PC-9 (cell line): ENCODE measurements at regions of chr1 and their contacts with region 1.

Region 1: GRCh38 chr1:116570358-116571200 is at the start of gene CD58:
- DNase-seq: peak; percentile 79 to 83
- H3K4me3 ChIP-seq: peak within 1 kb of the TSS; percentile 85
- H3K27ac ChIP-seq: peak within 1 kb of the TSS; percentile 90
- H3K4me1 ChIP-seq: peaks cover 37% of the 10 kb centered on the region
- H3K27me3 ChIP-seq: no peaks in the 10 kb centered on the region
- CTCF ChIP-seq: peak; percentile 78
- total RNA-seq, gene CD58: 15.9 and 23.6 TPM in 2 replicates

Region 2: GRCh38 chr1:115882913-115883902 is 687.4 kb before region 1 on chr1:
- CTCF ChIA-PET with region 1: no interaction called
- POLR2A ChIA-PET with region 1: no interaction called
- intact Hi-C with region 1: no loop called
- DNase-seq: no peak
- H3K4me3 ChIP-seq: no peak overlapping the region
- H3K27ac ChIP-seq: no peak overlapping the region
- H3K4me1 ChIP-seq: no peaks in the 10 kb centered on the region
- H3K27me3 ChIP-seq: no peaks in the 10 kb centered on the region
- CTCF ChIP-seq: no peak

Region 3: GRCh38 chr1:116139592-116140134 is 430.9 kb before region 1 on chr1:
- CTCF ChIA-PET with region 1: no interaction called
- POLR2A ChIA-PET with region 1: no interaction called
- intact Hi-C with region 1: loop called (anchors 1 kb)
- DNase-seq: no peak
- H3K4me3 ChIP-seq: no peak overlapping the region
- H3K27ac ChIP-seq: no peak overlapping the region
- H3K4me1 ChIP-seq: no peaks in the 10 kb centered on the region
- H3K27me3 ChIP-seq: no peaks in the 10 kb centered on the region
- CTCF ChIP-seq: no peak

Region 4: GRCh38 chr1:116288201-116288761 is 282.3 kb before region 1 on chr1:
- CTCF ChIA-PET with region 1: no interaction called
- POLR2A ChIA-PET with region 1: no interaction called
- intact Hi-C with region 1: no loop called
- DNase-seq: no peak
- H3K4me3 ChIP-seq: no peak overlapping the region
- H3K27ac ChIP-seq: no peak overlapping the region
- H3K4me1 ChIP-seq: peaks cover 42% of the 10 kb centered on the region
- H3K27me3 ChIP-seq: no peaks in the 10 kb centered on the region
- CTCF ChIP-seq: no peak

Region 5: DNA sequence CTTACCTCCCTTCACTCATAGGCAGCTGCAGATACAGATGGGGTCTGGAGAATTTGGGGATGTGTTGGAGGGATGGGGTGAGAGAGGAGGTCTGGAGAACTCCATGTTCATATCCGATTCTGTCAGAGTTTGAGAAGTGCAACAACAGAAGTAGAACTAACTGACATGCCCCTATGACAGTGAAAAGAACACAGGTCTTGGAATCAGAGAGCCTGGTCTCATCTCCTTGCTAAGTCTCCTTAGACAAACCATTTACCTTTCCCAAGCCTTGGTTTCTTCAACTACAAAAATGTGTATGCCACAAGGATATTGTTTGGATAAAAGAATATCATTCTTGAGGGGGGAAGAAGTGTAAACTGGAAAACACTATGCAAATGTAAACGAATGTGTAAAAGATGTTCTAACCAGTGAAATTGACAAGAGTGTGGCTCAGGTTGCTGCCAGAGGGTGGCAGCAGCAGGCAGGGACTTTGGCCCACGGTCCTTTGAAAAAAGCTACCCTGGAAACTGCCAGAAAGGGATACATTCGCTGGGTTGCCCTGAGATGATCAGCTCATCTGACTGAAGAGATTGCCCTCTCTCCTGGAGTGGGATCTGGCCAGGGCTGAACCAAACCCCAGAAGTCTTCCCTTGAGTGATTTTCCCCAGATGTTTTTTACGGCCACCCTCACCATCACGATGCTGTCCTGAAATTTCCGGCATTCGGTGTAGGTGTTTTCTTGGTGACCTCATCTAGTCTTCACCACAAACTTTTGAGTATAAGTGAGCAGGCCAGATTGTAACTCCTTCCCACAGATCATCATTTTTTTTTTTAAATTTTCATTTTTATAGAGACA is 166.7 kb after region 1 on chr1:
- CTCF ChIA-PET with region 1: interaction called, 4 read pairs
- POLR2A ChIA-PET with region 1: no interaction called
- intact Hi-C with region 1: loop called (anchors 5 kb)
- DNase-seq: peak in 1 of 2 experiments; percentile 45
- H3K4me3 ChIP-seq: no peak overlapping the region
- H3K27ac ChIP-seq: no peak overlapping the region
- H3K4me1 ChIP-seq: no peaks in the 10 kb centered on the region
- H3K27me3 ChIP-seq: no peaks in the 10 kb centered on the region
- CTCF ChIP-seq: peak; percentile 95

Region 6: GRCh38 chr1:116853670-116854402 is 283.3 kb after region 1 on chr1:
- CTCF ChIA-PET with region 1: no interaction called
- POLR2A ChIA-PET with region 1: no interaction called
- intact Hi-C with region 1: loop called (anchors 10 kb)
- DNase-seq: peak; percentile 71 to 100
- H3K4me3 ChIP-seq: peak overlapping the region; percentile 34; the same call in 1 of the 2 replicates
- H3K27ac ChIP-seq: peak overlapping the region; percentile 77
- H3K4me1 ChIP-seq: peaks cover 47% of the 10 kb centered on the region
- H3K27me3 ChIP-seq: no peaks in the 10 kb centered on the region
- CTCF ChIP-seq: no peak

Region 7: DNA sequence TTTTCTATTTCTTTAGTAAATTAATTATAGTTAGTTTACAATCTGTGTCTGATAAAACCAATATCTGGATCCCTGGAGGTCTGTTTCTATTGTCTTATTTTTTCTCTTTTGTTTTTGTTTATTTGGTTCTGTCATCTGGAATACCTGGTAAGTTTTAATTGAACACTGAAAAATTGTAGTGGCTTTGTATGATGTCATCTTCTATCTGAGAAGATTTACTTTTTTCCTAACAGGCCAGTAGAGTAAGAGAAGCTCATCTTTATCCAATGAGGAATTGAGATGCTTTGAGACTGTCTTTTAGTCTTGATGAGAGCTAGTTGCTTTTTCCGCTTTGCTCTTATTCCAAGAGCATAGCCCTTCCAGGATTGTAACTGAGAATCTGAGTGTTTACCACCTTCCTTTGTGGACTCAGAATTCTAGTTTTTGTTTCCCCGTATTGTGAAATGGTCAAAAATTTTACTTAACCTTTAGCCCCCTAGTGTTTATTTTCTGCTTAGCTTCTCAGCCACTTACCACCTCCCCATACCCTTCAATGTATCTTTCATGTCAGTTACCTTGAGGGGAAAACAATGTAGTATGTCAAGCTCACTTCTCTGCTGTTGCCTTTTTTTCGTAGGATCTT is 364.1 kb after region 1 on chr1:
- CTCF ChIA-PET with region 1: no interaction called
- POLR2A ChIA-PET with region 1: no interaction called
- intact Hi-C with region 1: no loop called
- DNase-seq: no peak
- H3K4me3 ChIP-seq: no peak overlapping the region
- H3K27ac ChIP-seq: no peak overlapping the region
- H3K4me1 ChIP-seq: peaks cover 8% of the 10 kb centered on the region
- H3K27me3 ChIP-seq: no peaks in the 10 kb centered on the region
- CTCF ChIP-seq: peak; percentile 54; the same call in 1 of the 2 replicates

Region 8: GRCh38 chr1:117284399-117285215 is 714.0 kb after region 1 on chr1:
- CTCF ChIA-PET with region 1: no interaction called
- POLR2A ChIA-PET with region 1: no interaction called
- intact Hi-C with region 1: loop called (anchors 5 kb)
- DNase-seq: peak; percentile 39 to 81
- H3K4me3 ChIP-seq: no peak overlapping the region
- H3K27ac ChIP-seq: no peak overlapping the region
- H3K4me1 ChIP-seq: peaks cover 10% of the 10 kb centered on the region
- H3K27me3 ChIP-seq: no peaks in the 10 kb centered on the region
- CTCF ChIP-seq: peak; percentile 98